AG04450 (cell line): ENCODE measurements at regions of chr10 and their contacts with region 1.

Region 1: DNA sequence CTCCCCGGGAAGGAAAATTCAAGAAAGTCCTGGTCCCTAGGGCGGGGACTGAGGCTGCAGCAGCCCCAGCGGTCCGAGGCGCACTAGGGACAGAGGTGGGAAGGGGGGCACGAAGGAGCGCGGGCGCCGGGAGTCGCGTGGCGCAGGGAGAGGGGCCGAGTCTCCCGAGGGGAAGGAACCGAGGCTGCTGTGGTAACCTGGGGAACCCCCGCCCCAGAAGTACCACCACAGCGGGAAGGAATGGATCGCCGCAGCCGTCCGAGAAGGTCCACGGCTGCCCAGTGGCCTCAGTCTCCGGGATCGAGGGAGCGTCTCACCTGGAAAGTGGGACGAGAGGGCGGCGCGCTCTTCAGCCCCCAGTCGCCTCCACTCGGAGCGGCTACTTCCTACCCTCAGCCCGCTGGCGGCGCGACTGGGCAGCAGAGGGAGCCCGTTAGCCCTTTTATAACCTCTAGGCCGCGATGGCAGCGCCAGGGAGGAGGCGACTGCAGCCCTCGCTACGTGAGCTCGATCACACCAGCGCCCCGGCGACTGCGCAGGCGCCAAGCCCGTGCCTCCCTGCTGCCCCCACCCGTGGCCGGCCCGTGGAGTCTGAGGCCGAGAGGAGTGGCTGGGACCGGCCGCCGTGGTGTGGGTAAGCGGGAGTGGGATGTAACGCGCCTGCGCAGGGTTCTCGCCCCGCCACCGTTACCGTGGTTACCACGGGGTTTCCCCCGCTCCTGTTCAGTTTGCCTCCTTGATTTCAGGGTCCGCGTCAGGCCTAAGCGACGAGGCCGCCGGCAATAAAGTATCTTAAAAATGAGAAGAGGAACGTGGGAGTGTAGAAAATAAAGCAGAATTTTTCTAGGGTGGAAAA is at the start of gene P4HA1:
- DNase-seq: peak; percentile 95
- H3K4me3 ChIP-seq: peak within 1 kb of the TSS; percentile 90
- H3K27ac ChIP-seq: peak within 1 kb of the TSS; percentile 95
- H3K27me3 ChIP-seq: no peaks in the 10 kb centered on the region
- CTCF ChIP-seq: peak; percentile 56
- polyA plus RNA-seq, gene P4HA1: 176 and 245 TPM in 2 replicates

Region 2: GRCh38 chr10:72852508-72852907 is 244.2 kb before region 1 on chr10:
- CTCF ChIA-PET with region 1: interaction called, 11 read pairs
- POLR2A ChIA-PET with region 1: no interaction called
- DNase-seq: no peak
- H3K4me3 ChIP-seq: no peak overlapping the region
- H3K27ac ChIP-seq: no peak overlapping the region
- H3K27me3 ChIP-seq: no peaks in the 10 kb centered on the region
- CTCF ChIP-seq: no peak

Region 3: GRCh38 chr10:72948762-72949161 is 147.9 kb before region 1 on chr10:
- CTCF ChIA-PET with region 1: no interaction called
- POLR2A ChIA-PET with region 1: no interaction called
- DNase-seq: no peak
- H3K4me3 ChIP-seq: no peak overlapping the region
- H3K27ac ChIP-seq: no peak overlapping the region
- H3K27me3 ChIP-seq: peaks cover 18% of the 10 kb centered on the region
- CTCF ChIP-seq: no peak

Region 4: GRCh38 chr10:73083221-73083620 is 13.5 kb before region 1 on chr10:
- CTCF ChIA-PET with region 1: interaction called, 17 read pairs
- POLR2A ChIA-PET with region 1: interaction called, 11 read pairs
- DNase-seq: no peak
- H3K4me3 ChIP-seq: no peak overlapping the region
- H3K27ac ChIP-seq: no peak overlapping the region
- H3K27me3 ChIP-seq: no peaks in the 10 kb centered on the region
- CTCF ChIP-seq: no peak

Region 5: DNA sequence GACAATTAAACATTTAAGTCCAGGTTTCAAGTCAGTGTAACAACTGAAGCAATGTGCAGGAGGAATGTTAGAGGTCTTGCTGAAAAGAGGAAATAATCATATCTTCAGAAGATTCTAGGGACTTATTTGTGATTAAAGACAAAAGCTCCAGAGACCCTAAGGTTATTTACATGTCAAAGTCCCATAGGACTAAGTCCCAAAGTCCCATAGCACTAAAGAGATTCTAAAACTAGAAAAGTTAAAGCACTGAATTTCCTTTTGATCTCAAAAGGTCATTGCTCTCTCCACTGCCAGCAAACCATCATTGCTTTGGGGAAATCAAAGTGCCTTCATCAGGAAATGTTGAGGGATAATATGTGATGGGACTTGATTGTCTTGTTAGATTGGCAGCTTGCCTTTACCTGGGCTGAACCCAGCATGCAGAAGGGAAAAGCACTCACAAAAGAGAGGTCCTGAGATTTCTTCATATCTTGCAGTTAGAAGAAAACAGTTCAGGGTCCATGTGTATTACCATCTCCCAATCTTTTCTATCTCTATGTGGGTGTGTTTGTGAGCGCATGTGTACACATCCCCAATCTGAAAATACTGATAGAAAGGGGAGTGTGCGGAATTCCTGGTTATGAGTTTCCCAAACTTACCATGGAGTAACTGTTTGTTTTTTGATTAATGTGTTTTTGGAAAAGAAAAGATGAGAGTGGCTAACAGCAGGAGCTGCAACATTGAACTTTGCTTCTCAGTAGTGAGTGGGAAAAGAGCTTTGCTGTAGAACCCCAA is 35.4 kb after region 1 on chr10:
- CTCF ChIA-PET with region 1: interaction called, 20 read pairs
- POLR2A ChIA-PET with region 1: no interaction called
- DNase-seq: no peak
- H3K4me3 ChIP-seq: no peak overlapping the region
- H3K27ac ChIP-seq: no peak overlapping the region
- H3K27me3 ChIP-seq: no peaks in the 10 kb centered on the region
- CTCF ChIP-seq: no peak

Region 6: DNA sequence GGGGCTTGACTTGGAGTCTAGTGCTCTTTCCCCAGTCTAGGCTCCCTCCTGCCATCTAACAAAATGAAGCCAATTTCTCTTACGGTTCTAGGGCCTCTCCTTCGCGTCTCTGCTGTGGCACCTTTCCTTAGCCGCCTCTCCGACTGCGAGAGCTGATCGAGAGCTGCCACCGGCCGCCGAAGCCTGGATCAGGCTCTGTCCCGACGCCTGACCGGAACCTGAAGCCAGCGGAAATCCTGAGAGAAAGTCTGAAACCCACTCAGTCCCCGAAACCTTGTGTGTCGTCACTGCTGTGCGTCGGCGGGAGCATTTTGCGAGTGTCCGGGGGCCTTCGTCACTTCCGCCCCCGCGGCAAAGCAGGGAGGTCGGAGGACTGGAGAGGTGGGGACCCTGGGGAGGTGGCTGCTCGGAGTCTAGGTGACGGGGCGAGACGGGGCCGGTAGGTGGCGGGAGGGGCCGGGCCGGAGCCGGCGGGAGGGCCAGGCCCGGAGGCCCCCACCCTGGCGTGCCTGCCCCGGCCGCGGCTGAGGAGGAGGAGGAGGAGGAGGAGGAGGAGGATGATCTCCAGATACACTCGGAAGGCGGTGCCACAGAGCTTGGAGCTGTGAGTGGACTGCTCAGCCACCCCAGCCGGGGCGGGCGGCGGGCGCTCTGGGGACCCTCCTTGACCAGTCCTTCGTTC is 71.2 kb after region 1 on chr10 and contains the starts of genes ECD and FAM149B1:
- CTCF ChIA-PET with region 1: interaction called, 5 read pairs
- POLR2A ChIA-PET with region 1: interaction called, 26 read pairs
- DNase-seq: peak; percentile 71
- H3K4me3 ChIP-seq: peak within 1 kb of the TSS; percentile 97
- H3K27ac ChIP-seq: peak within 1 kb of the TSS; percentile 98
- H3K27me3 ChIP-seq: no peaks in the 10 kb centered on the region
- CTCF ChIP-seq: no peak
- polyA plus RNA-seq, gene ECD: 36.1 and 43.9 TPM in 2 replicates
- polyA plus RNA-seq, gene FAM149B1: 35.8 and 42.9 TPM in 2 replicates